Tibial artery (tissue), 4 donors: ENCODE measurements at regions of chr20 and their contacts with region 1.

Region 1: DNA sequence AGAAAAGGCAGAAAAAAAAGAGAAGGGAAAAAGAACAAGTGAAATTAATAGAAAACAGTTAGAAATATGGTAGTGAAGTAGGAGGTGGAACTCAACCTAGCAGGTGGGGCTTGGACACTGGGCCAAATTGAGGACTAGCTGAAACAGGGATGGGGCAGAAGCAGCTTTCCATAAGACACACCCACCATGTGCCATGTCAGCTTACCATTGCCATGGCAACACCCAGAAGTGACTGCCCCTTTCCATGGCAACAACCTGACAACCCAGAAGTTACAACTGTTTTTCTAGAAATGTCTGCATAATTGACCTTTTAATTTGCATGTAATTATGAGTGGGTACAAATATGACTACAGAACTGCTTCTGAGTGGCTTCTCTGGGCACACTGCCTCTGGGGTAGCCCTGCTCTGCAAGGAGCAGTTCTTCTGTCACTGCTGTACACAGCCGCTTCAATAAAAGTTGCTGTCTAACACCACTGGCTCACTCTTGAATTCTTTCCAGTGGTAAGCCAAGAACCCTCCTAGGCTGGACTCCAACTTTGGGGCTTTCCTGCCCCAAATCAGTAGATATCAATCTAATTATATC is 35.9 kb upstream of the SLC24A3 start:
- DNase-seq: no peak
- H3K4me3 ChIP-seq: no peak overlapping the region
- H3K27ac ChIP-seq: no peak overlapping the region
- H3K4me1 ChIP-seq: no peaks in the 10 kb centered on the region
- H3K27me3 ChIP-seq: no peaks in the 10 kb centered on the region
- CTCF ChIP-seq: no peak

Region 2: GRCh38 chr20:18929800-18930199 is 246.8 kb before region 1 on chr20:
- intact Hi-C with region 1: loop called (anchors 10 kb)
- DNase-seq: no peak
- H3K4me3 ChIP-seq: no peak overlapping the region
- H3K27ac ChIP-seq: no peak overlapping the region
- H3K4me1 ChIP-seq: no peaks in the 10 kb centered on the region
- H3K27me3 ChIP-seq: no peaks in the 10 kb centered on the region
- CTCF ChIP-seq: no peak